HCT116 (cell line): ENCODE measurements at regions of chr7 and their contacts with region 1.

Region 1: DNA sequence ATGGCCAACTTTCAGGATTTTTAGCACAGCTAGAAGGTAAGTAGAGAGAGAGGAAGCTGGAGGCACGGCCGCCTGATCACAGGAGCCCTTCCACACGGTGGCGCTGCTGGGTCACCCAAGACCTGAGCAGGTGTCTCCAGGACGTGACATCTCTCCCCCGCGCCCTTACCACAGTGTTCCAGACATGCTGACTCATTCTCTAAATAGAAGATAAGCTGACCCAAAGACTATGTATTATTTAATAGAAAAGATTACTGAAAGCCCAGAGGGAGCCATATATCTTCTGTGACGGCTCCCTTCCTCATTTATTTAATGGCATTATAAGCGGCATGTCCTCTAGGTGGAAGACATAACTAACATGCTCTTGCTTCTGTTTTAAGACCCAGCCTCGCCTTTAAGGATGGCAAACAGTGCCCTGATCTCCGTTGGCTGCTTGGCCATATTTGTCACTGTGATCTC is 26.0 kb upstream of the MALSU1 start:
- DNase-seq: peak; percentile 93
- ATAC-seq: peak; percentile 95
- H3K4me3 ChIP-seq: peak overlapping the region; percentile 34 to 47
- H3K27ac ChIP-seq: peak overlapping the region; percentile 57
- H3K4me1 ChIP-seq: peaks cover 9 to 24% of the 10 kb centered on the region in 2 experiments; a peak in 3 of 4 replicates
- H3K27me3 ChIP-seq: no peaks in the 10 kb centered on the region
- CTCF ChIP-seq: peak; percentile 85 to 89 (median 89)
- POLR2A ChIP-seq: no peak
- RAD21 ChIP-seq: peak; percentile 90

Region 2: DNA sequence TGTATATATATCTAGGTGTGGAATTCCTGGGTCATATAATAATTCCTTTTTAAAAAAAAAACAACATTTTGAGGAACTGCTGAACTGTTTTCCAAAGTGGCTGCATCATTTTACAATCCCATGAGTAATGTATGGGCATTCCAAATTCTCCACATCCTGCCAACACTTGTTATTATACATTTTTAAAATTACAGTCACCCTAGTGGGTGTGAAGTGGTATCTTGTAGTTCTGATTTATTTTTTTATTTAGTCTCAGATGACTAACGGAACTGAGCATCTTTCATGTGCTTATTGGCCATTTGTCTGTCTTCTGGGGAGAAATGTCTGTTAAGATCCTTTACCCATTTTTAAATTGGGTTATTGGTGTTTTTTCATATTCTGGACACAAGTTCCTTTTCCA is 179.6 kb before region 1 on chr7:
- CTCF ChIA-PET with region 1: no interaction called
- POLR2A ChIA-PET with region 1: no interaction called
- RAD21 ChIA-PET with region 1: no interaction called
- intact Hi-C with region 1: loop called (anchors 10 kb)
- DNase-seq: no peak
- ATAC-seq: no peak
- H3K4me3 ChIP-seq: no peak overlapping the region
- H3K27ac ChIP-seq: no peak overlapping the region
- H3K4me1 ChIP-seq: no peaks in the 10 kb centered on the region
- H3K27me3 ChIP-seq: no peaks in the 10 kb centered on the region
- CTCF ChIP-seq: no peak
- POLR2A ChIP-seq: no peak
- RAD21 ChIP-seq: no peak

Region 3: GRCh38 chr7:23261843-23262452 is 11.2 kb before region 1 on chr7:
- CTCF ChIA-PET with region 1: interaction called, 23 read pairs
- POLR2A ChIA-PET with region 1: no interaction called
- RAD21 ChIA-PET with region 1: no interaction called
- intact Hi-C with region 1: no loop called
- DNase-seq: peak; percentile 58
- ATAC-seq: peak; percentile 99
- H3K4me3 ChIP-seq: no peak overlapping the region
- H3K27ac ChIP-seq: no peak overlapping the region
- H3K4me1 ChIP-seq: peaks cover 0 to 3% of the 10 kb centered on the region in 2 experiments; a peak in 2 of 4 replicates
- H3K27me3 ChIP-seq: no peaks in the 10 kb centered on the region
- CTCF ChIP-seq: peak; percentile 79 to 95 (median 83)
- POLR2A ChIP-seq: no peak
- RAD21 ChIP-seq: peak; percentile 88

Region 4: GRCh38 chr7:23357190-23358093 is 84.3 kb after region 1 on chr7:
- CTCF ChIA-PET with region 1: interaction called, 11 read pairs
- POLR2A ChIA-PET with region 1: no interaction called
- RAD21 ChIA-PET with region 1: interaction called in 1 of 2 experiments, 3 read pairs
- intact Hi-C with region 1: loop called (anchors 2 kb)
- DNase-seq: peak; percentile 43
- ATAC-seq: peak; percentile 76
- H3K4me3 ChIP-seq: no peak overlapping the region
- H3K27ac ChIP-seq: peak overlapping the region; percentile 64
- H3K4me1 ChIP-seq: peaks cover 68 to 72% of the 10 kb centered on the region in 2 experiments
- H3K27me3 ChIP-seq: no peaks in the 10 kb centered on the region
- CTCF ChIP-seq: peak in 2 of 3 experiments; percentile 58 to 61; a peak in 3 of 6 replicates
- POLR2A ChIP-seq: no peak
- RAD21 ChIP-seq: peak; percentile 78

Region 5: DNA sequence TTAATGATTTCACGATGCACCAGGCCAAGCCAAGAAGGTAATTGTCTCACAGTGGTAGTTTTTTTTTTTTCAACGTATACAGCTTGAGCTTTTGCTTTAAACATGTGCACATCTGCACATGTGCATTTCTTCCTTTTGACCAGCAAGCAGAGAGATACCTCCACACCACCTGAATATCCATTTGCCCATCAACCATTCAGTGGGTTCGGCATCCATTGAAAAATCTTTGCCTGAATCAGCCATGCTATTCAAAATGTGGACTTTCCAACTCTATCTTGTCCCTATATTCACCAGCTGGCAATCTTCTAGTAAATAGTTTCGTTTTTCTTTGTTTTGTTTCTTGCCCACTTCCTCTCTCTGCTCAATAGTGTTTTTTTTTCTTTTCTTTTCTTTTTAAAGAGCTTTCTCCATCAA is 266.3 kb after region 1 on chr7:
- CTCF ChIA-PET with region 1: interaction called, 30 read pairs
- POLR2A ChIA-PET with region 1: interaction called, 3 read pairs
- RAD21 ChIA-PET with region 1: interaction called in 1 of 2 experiments, 10 read pairs
- intact Hi-C with region 1: no loop called
- DNase-seq: no peak
- ATAC-seq: no peak
- H3K4me3 ChIP-seq: no peak overlapping the region
- H3K27ac ChIP-seq: no peak overlapping the region
- H3K4me1 ChIP-seq: peaks cover 4 to 7% of the 10 kb centered on the region in 2 experiments; a peak in 3 of 4 replicates
- H3K27me3 ChIP-seq: no peaks in the 10 kb centered on the region
- CTCF ChIP-seq: no peak
- POLR2A ChIP-seq: no peak
- RAD21 ChIP-seq: no peak

Region 6: DNA sequence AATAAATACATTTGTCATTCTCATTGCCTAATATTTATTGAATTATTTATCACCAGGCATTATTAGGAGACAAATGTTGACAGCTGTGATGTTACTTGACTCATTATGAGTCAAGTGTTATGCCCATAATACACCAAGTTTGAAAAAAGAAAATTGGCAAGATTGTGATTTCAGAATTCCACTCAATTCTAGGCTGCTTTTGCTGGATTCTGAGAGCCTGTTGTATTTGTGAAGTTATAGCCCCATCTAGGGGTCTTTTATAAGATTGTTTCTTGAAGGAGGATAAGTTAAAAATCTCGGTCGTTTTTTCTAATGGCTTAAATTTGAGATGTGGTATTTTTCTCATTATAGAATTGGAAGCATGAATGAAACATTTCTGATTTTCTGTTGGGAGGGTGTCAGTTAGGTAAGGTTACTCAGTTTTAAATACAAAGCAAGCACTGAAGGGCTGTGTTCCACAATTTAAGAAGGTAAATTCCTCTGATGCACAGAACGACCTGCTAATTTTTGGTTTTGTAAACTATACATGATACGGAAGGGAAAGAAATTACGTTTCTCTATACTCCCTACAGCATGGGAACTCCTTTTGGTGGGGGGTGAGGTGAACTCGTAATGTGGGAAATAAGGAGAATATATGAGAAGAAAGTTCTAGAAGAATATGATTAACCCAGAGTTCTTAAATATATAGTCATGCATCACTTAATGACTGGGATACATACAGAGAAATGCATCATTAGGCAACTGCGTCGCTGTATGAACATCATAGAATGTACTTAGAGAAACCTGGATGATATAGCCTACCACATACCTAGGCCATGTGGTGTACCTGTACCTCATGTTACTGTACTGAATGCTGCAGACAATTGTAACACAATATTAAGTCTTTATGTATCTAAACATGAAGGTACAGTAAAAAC is 439.5 kb after region 1 on chr7:
- CTCF ChIA-PET with region 1: interaction called, 7 read pairs
- POLR2A ChIA-PET with region 1: no interaction called
- RAD21 ChIA-PET with region 1: no interaction called
- intact Hi-C with region 1: loop called (anchors 5 kb)
- DNase-seq: peak; percentile 67
- ATAC-seq: peak; percentile 64
- H3K4me3 ChIP-seq: no peak overlapping the region
- H3K27ac ChIP-seq: no peak overlapping the region
- H3K4me1 ChIP-seq: peaks cover 0 to 17% of the 10 kb centered on the region in 2 experiments; a peak in 2 of 4 replicates
- H3K27me3 ChIP-seq: no peaks in the 10 kb centered on the region
- CTCF ChIP-seq: peak; percentile 18 to 96 (median 70); a peak in 5 of 6 replicates
- POLR2A ChIP-seq: no peak
- RAD21 ChIP-seq: peak; percentile 92

Region 7: GRCh38 chr7:23893942-23894891 is 621.0 kb after region 1 on chr7:
- CTCF ChIA-PET with region 1: no interaction called
- POLR2A ChIA-PET with region 1: no interaction called
- RAD21 ChIA-PET with region 1: no interaction called
- intact Hi-C with region 1: no loop called
- DNase-seq: no peak
- ATAC-seq: no peak
- H3K4me3 ChIP-seq: no peak overlapping the region
- H3K27ac ChIP-seq: no peak overlapping the region
- H3K4me1 ChIP-seq: no peaks in the 10 kb centered on the region
- H3K27me3 ChIP-seq: no peaks in the 10 kb centered on the region; the same call in 1 of the 2 replicates
- CTCF ChIP-seq: no peak
- POLR2A ChIP-seq: no peak
- RAD21 ChIP-seq: no peak